ENCODE measurements at regions of chr10 and their contacts with region 1.

Region 1: DNA sequence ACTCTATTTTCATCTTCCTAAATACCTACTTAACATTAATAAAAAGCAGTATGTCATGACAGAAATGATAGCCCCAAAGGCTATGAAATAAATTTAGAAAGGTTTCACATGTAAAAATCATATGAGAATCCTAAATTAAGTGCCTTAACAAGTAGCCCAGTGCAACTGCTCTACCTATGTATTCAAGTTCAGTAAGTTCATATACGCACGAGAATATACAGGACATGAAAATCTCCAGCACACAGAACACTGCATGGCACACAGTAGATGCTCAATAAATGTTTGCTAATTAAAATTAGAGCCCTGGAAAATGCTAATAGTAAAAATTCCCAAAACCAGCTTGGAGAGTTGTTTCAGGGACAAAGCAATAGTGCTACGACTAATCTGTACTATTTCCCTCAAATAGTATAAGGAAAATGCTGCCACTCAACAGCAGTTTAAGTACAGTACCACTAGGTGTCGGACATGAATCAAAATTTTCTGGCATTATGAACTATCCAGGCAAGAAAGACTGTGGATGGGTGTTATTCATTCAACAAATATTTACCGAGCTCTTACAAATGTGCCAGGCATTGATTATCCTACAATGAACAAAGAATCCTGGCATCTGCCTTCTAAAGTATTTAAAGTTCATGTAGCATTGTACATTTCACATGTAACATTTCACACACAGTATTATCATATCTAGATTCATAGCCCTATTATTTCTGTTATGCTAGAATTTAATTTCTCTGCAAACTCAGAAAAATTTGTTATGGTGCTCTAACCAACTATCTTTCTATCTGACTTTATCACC is 80.9 kb downstream of the ARHGAP21 start:
- DNase-seq: peak in 7 of 9 donors; percentile 24 to 64 (median 58)
- ATAC-seq: peak; percentile 93
- H3K4me3 ChIP-seq: no peak overlapping the region
- H3K4me3 Mint-ChIP-seq: no peak overlapping the region
- H3K27ac ChIP-seq: no peak overlapping the region
- H3K27ac Mint-ChIP-seq: no peak overlapping the region
- H3K4me1 ChIP-seq: no peaks in the 10 kb centered on the region
- H3K4me1 Mint-ChIP-seq: peaks cover 0 to 2% (median 0%) of the 10 kb centered on the region in 7 donors
- H3K27me3 ChIP-seq: no peaks in the 10 kb centered on the region
- H3K27me3 Mint-ChIP-seq: no peaks in the 10 kb centered on the region

Region 2: DNA sequence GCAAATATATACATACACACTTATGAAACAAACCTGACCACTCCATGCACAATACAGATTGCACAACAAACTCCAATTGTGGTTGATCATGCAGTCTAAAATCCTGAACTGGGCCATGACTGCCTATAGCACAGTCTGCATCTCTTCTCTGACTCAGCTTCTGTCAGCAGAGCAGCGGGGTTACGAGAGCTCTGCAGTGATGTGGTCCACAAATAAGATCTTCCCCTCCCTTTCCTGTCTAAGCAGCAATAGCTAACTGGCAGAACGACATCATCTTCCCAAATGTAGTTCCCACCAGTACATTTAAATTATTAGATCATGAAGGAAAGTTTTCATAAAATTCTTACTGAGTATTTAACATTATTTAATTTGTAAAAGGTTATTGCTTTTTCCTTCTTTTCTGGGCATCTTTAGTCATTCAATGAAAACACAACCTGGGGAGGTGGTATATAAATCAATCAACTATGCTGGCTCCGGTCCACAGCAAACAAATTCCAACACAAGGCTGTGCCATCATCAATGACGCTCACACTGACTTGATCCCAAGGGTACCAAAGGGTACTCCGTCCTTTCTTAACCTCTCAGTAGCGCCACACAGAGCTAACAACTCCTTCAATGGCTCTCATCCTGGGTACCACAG is 63.8 kb after region 1 on chr10:
- CTCF ChIA-PET with region 1: no interaction called
- POLR2A ChIA-PET with region 1: no interaction called
- intact Hi-C with region 1: loop called in 1 of 2 experiments (anchors 5 kb)
- DNase-seq: peak in 4 of 9 donors; percentile 13 to 31 (median 24)
- ATAC-seq: peak; percentile 93
- H3K4me3 ChIP-seq: no peak overlapping the region
- H3K4me3 Mint-ChIP-seq: no peak overlapping the region
- H3K27ac ChIP-seq: no peak overlapping the region
- H3K27ac Mint-ChIP-seq: no peak overlapping the region
- H3K4me1 ChIP-seq: no peaks in the 10 kb centered on the region
- H3K4me1 Mint-ChIP-seq: peaks cover under 1 to 22% (median 3%) of the 10 kb centered on the region in 7 donors
- H3K27me3 ChIP-seq: no peaks in the 10 kb centered on the region
- H3K27me3 Mint-ChIP-seq: no peaks in the 10 kb centered on the region

Region 3: DNA sequence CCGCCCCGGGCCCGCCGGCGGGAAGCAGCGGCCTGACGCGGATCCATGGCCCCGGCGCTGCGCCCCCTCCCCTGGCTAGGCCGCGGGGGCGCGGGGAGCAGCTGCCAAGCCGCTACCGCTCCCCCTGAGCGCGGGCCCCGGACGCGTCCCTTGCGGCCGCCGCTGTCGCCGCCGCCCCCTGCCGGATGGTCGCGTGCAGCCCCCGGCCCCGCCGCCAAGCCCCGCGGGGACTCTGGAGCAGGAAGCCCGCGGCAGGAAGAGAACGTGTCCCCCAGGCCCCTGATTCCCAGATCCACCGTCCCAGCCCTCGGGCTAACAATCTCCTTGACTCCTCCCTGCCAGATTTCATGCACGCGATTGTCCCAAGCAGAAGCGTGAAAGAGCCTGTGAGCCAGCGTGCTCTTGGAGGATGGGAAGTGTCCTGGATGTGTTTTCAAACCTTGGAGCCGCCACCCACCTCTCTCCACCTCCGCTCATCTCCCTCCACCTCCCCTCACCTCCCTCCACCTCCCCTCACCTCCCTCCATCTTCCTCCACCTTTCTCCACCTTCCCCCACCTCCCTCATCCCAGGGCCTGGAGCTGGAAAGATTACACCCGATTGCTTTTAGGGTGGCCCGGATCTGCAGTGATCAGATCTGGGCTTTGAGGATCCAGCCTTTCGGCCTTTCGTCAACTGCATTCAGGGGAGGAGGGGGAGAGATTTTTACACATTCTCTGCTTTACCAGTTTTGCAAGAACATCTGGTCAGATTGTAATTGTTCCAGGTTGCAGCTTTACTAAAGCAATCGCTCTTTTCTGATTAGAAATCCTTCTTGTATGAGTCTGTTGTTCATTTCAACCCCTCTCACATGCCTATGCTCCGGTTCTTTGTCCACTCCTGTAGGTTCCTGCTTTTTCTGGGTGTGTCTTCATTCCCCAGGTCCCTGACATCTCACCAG is 310.2 kb after region 1 on chr10:
- CTCF ChIA-PET with region 1: interaction called, 10 read pairs
- POLR2A ChIA-PET with region 1: no interaction called
- intact Hi-C with region 1: loop called (anchors 1 kb)
- DNase-seq: peak; percentile 31 to 66 (median 55)
- ATAC-seq: peak; percentile 89
- H3K4me3 ChIP-seq: peak overlapping the region; percentile 55
- H3K4me3 Mint-ChIP-seq: peak overlapping the region; percentile 76 to 89 (median 86)
- H3K27ac ChIP-seq: peak overlapping the region; percentile 59
- H3K27ac Mint-ChIP-seq: peak overlapping the region; percentile 49 to 91 (median 83)
- H3K4me1 ChIP-seq: peaks cover 4 to 6% of the 10 kb centered on the region in 2 donors
- H3K4me1 Mint-ChIP-seq: peaks cover 7 to 30% (median 18%) of the 10 kb centered on the region in 7 donors
- H3K27me3 ChIP-seq: no peaks in the 10 kb centered on the region
- H3K27me3 Mint-ChIP-seq: no peaks in the 10 kb centered on the region

Region 4: GRCh38 chr10:25080880-25081581 is 438.2 kb after region 1 on chr10:
- CTCF ChIA-PET with region 1: interaction called, 6 read pairs
- POLR2A ChIA-PET with region 1: no interaction called
- intact Hi-C with region 1: loop called (anchors 1 kb)
- DNase-seq: peak; percentile 4 to 53 (median 42)
- ATAC-seq: peak; percentile 79
- H3K4me3 ChIP-seq: no peak overlapping the region
- H3K4me3 Mint-ChIP-seq: no peak overlapping the region
- H3K27ac ChIP-seq: no peak overlapping the region
- H3K27ac Mint-ChIP-seq: no peak overlapping the region
- H3K4me1 ChIP-seq: peaks cover 0 to 4% of the 10 kb centered on the region in 2 donors
- H3K4me1 Mint-ChIP-seq: peaks cover 0 to 8% (median 4%) of the 10 kb centered on the region in 7 donors
- H3K27me3 ChIP-seq: peaks cover 0 to 4% of the 10 kb centered on the region in 2 donors
- H3K27me3 Mint-ChIP-seq: peaks cover 0 to 23% (median 5%) of the 10 kb centered on the region in 5 donors